ENCODE measurements at regions of chr7 and their contacts with region 1.

Region 1: GRCh38 chr7:47581806-47582763 is at the start of gene TNS3:
- DNase-seq: peak; percentile 64
- ATAC-seq: peak; percentile 80
- H3K4me3 Mint-ChIP-seq: peak within 1 kb of the TSS; percentile 87
- H3K27ac Mint-ChIP-seq: peak within 1 kb of the TSS; percentile 83
- H3K4me1 Mint-ChIP-seq: peaks cover 57% of the 10 kb centered on the region
- H3K27me3 Mint-ChIP-seq: no peaks in the 10 kb centered on the region
- CTCF ChIP-seq: no peak
- total RNA-seq, gene TNS3: 29.4 and 30.3 TPM in 2 replicates

Region 2: DNA sequence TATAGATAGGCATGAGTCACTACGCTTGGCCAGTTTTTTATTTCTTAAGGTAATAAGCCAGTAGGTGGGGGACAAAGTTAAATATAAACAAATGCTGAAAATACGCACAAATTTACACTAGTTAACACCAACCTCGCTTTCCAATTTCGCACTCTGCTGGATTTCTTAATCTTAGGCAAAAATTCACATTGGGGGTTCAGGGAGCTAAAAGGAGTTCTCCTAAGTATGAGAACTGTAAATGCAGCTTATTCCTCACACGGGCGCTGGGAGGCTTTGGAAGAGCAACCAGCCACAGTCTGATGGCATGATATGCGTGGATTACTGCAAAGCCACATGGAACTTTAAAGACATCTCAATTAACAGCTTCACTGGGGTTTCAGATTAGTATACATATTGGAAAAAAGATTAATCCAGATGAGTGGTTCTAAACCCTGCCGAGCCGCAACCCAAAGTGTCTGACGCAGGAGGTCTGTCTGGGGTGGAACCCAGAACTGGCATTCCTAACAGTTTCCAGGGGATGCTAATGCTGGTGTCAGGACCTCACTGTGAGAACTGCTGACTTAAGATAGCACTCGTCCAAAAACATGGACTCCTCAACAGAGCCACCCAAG is 16.3 kb before region 1 on chr7:
- CTCF ChIA-PET with region 1: no interaction called
- POLR2A ChIA-PET with region 1: interaction called, 6 read pairs
- intact Hi-C with region 1: loop called (anchors 2 kb)
- DNase-seq: no peak
- ATAC-seq: no peak
- H3K4me3 Mint-ChIP-seq: no peak overlapping the region
- H3K27ac Mint-ChIP-seq: no peak overlapping the region
- H3K4me1 Mint-ChIP-seq: peaks cover 37% of the 10 kb centered on the region
- H3K27me3 Mint-ChIP-seq: no peaks in the 10 kb centered on the region
- CTCF ChIP-seq: no peak

Region 3: DNA sequence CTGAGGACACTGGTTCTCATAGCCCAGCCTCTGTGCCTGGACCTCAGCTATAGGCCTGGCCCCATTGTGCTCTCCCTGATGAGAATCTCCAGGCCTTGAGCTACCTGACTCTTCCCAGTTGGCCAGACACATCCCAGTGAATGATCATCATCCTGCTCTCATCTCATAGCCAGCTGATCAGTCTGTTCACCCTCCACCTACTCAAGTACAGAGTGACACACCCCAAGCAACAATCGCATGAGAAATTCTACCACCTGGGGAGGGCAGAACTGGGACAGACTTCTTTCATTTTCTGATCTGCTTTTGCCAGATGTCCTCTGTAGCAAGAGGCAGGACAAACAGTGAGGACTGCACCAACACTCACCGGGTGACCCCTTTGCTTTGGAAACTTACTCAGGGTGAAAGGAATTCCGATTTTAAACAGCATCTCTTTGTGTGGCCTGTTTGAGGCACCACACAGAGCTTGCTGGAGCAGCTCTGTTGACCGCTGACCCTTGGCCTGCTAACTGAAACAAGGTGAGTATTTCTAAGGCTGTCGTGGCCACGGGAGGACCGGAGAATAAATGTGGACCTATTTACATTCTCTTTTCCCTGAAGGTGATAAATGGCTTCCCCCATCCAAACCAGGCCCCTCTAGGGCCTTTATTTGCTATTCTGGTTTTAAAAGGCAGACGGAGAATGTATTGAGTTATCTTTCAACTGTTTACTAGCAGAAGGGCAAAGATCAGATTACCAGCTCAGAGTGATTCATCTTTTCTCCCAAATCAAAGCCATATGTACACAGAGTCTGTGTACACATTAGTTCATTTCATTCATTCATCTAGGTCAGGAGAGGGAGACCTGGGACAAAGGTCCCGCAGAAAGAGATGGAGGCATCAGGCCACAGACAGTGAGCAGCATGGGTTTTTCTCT is 181.2 kb after region 1 on chr7:
- CTCF ChIA-PET with region 1: no interaction called
- POLR2A ChIA-PET with region 1: no interaction called
- intact Hi-C with region 1: no loop called
- DNase-seq: no peak
- ATAC-seq: peak; percentile 89
- H3K4me3 Mint-ChIP-seq: peak overlapping the region; percentile 57
- H3K27ac Mint-ChIP-seq: peak overlapping the region; percentile 85
- H3K4me1 Mint-ChIP-seq: peaks cover 41% of the 10 kb centered on the region
- H3K27me3 Mint-ChIP-seq: no peaks in the 10 kb centered on the region
- CTCF ChIP-seq: no peak

Region 4: DNA sequence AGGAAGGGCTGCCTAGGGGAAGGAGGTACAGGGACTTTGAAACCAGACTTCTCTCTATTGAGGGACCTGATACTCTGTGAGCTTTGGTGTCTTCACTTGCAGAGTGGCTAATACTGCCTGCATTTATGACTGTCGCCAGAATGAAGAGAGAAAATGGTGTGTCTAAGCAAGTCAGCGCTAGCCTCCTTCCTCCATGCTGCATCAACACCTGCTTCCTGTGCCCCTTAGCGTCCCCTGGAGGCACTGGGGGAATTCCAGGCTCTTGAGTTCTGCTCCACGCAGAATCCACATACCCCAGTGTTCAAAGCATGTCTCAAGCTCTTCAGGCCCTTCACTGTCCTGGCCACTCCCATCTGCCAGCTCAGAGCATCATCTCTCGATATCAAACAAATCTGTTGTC is 225.7 kb after region 1 on chr7:
- CTCF ChIA-PET with region 1: no interaction called
- POLR2A ChIA-PET with region 1: no interaction called
- intact Hi-C with region 1: loop called (anchors 5 kb)
- DNase-seq: no peak
- ATAC-seq: peak; percentile 86
- H3K4me3 Mint-ChIP-seq: no peak overlapping the region
- H3K27ac Mint-ChIP-seq: no peak overlapping the region
- H3K4me1 Mint-ChIP-seq: peaks cover 42% of the 10 kb centered on the region
- H3K27me3 Mint-ChIP-seq: no peaks in the 10 kb centered on the region
- CTCF ChIP-seq: no peak